ENCODE measurements at regions of chr3 and their contacts with region 1.

Region 1: GRCh38 chr3:137925080-137925479 is 84.9 kb upstream of the CLDN18 start:
- DNase-seq: no peak
- H3K4me3 ChIP-seq: no peak overlapping the region
- H3K27ac ChIP-seq: no peak overlapping the region
- H3K4me1 ChIP-seq: no peaks in the 10 kb centered on the region
- H3K27me3 ChIP-seq: no peaks in the 10 kb centered on the region
- CTCF ChIP-seq: no peak
- POLR2A ChIP-seq: no peak

Region 2: GRCh38 chr3:137514853-137515252 is 410.2 kb before region 1 on chr3:
- intact Hi-C with region 1: loop called (anchors 5 kb)
- DNase-seq: no peak
- H3K4me3 ChIP-seq: no peak overlapping the region
- H3K27ac ChIP-seq: no peak overlapping the region
- H3K4me1 ChIP-seq: no peaks in the 10 kb centered on the region
- H3K27me3 ChIP-seq: no peaks in the 10 kb centered on the region
- CTCF ChIP-seq: no peak
- POLR2A ChIP-seq: no peak

Region 3: DNA sequence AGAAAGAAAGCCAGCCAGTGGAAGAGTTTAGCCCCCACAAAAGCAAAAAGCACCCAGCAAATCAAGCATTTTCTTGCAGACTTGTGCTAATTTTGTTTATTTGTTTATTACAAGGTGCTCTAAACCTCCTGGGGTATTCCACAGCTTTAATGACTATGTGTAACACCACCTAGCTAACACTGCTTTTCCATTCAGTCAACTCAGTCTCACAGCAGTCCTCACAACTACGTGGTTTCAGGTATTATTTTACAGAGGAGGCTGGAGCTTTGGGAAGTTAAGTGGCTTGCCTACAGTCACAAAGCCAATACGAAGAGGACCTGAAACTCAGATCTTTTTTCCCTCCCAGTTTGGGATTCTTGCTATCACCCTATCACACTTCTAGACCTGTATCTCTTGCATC is 146.1 kb before region 1 on chr3:
- intact Hi-C with region 1: no loop called
- DNase-seq: no peak
- H3K4me3 ChIP-seq: no peak overlapping the region
- H3K27ac ChIP-seq: no peak overlapping the region
- H3K4me1 ChIP-seq: no peaks in the 10 kb centered on the region
- H3K27me3 ChIP-seq: no peaks in the 10 kb centered on the region
- CTCF ChIP-seq: no peak
- POLR2A ChIP-seq: no peak

Region 4: DNA sequence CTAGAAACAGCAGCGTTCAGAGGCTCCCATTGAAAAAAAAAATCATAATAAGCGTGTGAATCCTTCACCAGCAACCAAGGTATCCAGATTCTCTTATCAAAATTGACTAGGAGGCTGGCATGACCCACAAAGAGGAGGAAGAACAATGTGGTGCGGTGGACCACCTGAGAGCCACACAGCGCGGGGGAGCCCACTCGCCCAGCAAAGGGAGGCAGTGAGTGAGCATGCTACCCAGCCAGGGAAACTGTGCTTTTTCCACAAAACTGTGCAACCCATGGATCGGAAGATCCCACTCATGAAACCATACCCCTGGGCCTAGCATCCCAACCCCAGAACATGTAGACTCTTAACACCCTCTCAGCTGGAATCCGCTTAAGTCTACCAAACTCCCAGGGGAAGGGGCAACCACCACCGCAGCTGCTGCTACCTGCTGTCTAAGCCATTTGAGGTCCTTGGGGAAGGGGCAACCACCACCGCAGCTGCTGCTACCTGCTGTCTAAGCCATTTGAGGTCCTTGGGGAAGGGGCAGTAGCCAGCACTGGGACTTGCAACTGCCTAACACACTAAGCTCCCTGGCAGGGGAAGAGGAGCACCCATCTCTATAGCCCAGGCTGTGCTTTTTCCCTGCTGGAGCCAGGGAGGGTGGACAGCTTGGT is 18.0 kb before region 1 on chr3:
- intact Hi-C with region 1: no loop called
- DNase-seq: no peak
- H3K4me3 ChIP-seq: no peak overlapping the region
- H3K27ac ChIP-seq: no peak overlapping the region
- H3K4me1 ChIP-seq: no peaks in the 10 kb centered on the region
- H3K27me3 ChIP-seq: no peaks in the 10 kb centered on the region
- CTCF ChIP-seq: no peak
- POLR2A ChIP-seq: no peak

Measured in vagina (tissue), 2 donors.